ENCODE measurements at regions of chr3 and their contacts with region 1.

Region 1: DNA sequence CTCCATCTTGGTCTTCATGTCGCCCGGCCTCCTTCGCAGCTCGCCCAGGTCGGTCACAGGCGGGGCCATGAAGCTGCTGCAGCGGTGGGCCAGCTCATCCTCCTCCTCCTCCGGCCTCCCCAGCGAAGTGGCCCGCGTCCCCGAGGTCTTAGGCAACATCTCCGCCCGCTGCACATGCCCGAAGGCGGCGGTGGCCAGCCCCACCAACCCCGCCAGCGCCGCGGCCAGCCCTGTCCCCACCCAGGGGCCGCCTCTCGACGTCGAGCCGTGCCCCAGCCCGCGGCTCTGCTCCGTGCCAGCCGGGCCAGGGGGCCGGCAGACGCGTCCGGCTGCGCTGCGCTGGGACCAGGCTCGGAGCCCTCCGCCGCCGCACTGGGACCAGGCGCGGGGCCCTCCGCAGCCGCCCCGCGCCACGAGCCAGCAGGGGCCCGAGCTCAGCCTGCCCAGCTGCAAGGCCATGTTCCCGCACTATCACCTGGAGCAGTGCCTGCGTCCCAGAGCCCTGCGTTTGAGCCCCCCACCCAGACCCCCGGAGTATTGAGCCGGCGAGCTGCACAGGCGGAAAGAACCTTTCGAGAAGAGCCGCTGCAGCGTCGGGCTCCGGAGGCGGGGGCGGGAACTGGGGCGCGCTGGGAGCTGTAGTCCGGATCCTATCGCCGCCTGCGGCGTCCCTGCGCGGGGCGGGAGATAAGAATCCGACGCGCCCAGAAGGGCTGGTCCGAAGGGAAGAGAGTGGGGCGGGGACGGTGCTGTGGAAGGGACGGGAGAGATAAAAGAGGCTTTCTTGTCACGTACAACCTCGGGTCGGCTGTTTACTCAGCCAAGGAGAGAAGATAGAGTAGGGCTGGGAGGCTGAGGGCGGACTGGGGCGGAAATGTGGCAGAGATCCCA is at the start of gene CPOX:
- DNase-seq: peak; percentile 95
- ATAC-seq: peak; percentile 99
- H3K4me3 Mint-ChIP-seq: peak within 1 kb of the TSS; percentile 88
- H3K27ac Mint-ChIP-seq: peak within 1 kb of the TSS; percentile 90
- H3K4me1 Mint-ChIP-seq: peaks cover 51% of the 10 kb centered on the region
- H3K27me3 Mint-ChIP-seq: no peaks in the 10 kb centered on the region
- total RNA-seq, gene CPOX: 40.3 to 41.9 TPM

Region 2: DNA sequence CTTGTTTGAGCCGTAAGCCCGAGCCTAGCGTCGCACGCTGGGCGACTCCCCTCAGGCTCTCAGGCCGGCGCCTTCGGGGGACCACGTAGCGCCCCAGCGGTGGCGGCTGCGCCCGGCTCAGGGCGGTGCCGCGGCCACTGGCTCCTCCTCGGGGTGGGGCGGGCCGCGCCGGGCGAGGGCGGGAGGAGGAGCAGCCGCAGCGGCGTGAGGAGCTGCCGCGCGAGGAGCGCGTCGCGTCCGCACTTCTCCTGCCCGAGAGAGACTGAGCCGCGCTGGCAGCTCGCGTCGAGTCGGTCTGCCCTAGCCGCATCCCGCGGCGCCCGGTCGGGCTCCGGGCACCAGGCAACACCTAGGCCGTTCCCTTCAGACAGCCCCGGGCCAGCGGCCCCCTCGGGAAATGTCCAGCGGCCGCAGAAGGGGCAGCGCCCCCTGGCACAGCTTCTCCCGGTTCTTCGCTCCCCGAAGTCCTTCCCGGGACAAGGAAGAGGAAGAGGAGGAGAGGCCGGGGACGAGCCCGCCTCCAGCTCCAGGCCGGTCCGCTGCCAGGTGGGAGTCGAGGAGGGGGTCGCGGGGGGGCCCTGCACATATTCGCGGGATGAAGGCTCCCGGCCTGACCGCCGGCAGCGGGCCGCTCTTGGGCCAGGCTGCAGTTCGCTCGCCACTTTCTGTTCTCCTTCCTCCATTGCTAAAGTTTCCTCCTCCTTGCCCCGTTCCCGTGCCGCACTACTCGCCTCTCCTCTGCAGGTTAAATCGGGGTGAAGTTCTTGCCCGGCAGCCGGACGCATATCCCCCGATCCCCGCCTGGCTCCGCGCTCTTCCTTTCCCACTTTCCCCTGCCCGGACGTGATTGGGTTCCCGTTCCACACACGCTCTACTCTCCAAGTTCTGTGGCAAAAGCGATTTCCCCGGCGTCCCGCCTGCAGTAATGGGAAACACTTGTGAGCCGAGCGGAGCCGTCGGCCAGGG is 771.2 kb before region 1 on chr3 and contains the start of gene CRYBG3:
- CTCF ChIA-PET with region 1: no interaction called
- POLR2A ChIA-PET with region 1: no interaction called
- intact Hi-C with region 1: loop called in 1 of 2 experiments (anchors 10 kb)
- DNase-seq: peak; percentile 90
- ATAC-seq: peak; percentile 99
- H3K4me3 Mint-ChIP-seq: peak within 1 kb of the TSS; percentile 82
- H3K27ac Mint-ChIP-seq: peak within 1 kb of the TSS; percentile 66
- H3K4me1 Mint-ChIP-seq: peaks cover 18% of the 10 kb centered on the region
- H3K27me3 Mint-ChIP-seq: peaks cover 26% of the 10 kb centered on the region
- total RNA-seq, gene CRYBG3: 4.2 to 4.9 TPM

Region 3: DNA sequence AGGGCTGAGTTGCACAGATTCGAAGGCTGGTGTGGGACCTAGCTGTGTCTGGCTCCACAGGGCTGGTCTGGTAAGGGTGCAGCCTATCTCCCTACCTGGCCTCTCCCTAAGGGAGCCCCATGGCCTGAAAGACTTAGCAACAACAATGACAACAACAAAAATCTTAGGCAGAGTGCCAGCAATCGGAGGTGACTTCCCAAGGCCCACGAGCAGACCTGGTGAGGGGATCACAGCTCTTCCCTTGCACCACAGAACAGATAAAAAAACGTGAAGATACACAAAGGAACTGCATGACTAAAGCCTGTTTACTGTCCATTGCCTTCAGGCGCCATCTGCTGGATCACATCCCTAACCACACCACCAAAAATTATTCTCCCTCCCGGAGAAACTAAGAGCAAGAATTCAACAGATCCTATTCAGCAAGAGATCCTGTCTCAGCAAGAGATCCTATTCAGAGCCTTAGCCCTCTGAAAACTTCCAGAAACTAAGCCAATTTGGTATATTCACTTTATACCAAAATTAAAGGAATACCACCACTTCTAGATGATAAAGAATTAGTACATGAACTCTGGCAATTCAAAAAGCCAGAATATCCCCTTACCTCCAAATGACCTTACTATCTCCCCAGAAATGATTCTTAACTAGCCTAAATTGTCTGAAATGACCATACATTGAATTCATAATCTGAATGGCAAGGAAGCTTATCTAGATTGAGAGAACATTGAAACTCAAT is 263.7 kb before region 1 on chr3:
- CTCF ChIA-PET with region 1: no interaction called
- POLR2A ChIA-PET with region 1: no interaction called
- intact Hi-C with region 1: loop called (anchors 5 kb)
- DNase-seq: peak; percentile 60
- ATAC-seq: peak; percentile 67
- H3K4me3 Mint-ChIP-seq: no peak overlapping the region
- H3K27ac Mint-ChIP-seq: no peak overlapping the region
- H3K4me1 Mint-ChIP-seq: no peaks in the 10 kb centered on the region
- H3K27me3 Mint-ChIP-seq: peaks cover 19% of the 10 kb centered on the region

Region 4: DNA sequence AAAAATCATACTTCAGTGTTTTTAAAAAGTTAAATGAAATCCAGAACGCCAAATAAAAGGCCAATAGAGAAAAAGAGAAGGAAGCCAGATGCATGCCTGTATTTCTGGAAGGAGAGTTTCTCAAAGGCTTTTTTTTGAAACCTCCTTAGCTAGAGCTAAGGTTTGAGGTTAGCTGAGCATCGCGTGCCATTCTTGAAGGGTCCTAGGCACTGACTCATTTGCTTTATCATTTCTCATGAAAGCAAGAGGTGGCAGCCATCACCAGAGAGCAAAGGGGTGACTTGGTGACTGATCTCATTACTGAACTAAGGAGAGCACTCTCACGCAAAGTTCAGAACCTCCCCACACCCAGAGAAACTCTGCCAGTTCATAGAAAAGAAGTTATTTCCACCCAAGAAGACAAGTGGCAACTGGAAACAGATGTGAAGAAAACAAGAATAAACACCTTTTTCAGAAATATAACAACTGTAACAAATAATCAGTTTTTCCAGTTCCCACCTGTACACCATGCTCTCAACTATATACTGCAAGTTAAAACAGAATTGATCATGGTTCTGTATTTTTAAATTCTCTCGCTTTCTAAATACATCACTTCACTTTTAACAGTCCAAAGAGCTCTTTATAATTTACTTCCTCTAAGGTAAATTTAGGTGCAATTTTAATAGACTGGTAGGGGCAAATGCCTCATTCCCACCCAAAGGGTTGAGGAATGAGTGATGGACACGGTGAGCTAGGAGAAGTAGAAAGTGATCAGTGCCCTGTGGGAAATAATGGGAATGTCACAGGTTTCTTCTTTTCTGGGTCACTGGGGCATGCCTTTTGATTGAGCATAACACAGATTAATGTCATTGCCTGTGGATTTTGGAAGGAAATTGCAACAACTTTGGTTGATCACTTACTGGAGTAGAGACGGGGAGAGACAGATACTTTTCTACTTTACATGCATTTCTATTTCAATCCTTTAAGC is 36.8 kb before region 1 on chr3:
- CTCF ChIA-PET with region 1: interaction called, 4 read pairs
- POLR2A ChIA-PET with region 1: interaction called, 11 read pairs
- intact Hi-C with region 1: loop called (anchors 1 to 2 kb)
- DNase-seq: peak; percentile 86
- ATAC-seq: peak; percentile 78
- H3K4me3 Mint-ChIP-seq: peak overlapping the region; percentile 67
- H3K27ac Mint-ChIP-seq: peak overlapping the region; percentile 94
- H3K4me1 Mint-ChIP-seq: peaks cover 83% of the 10 kb centered on the region
- H3K27me3 Mint-ChIP-seq: no peaks in the 10 kb centered on the region

Region 5: GRCh38 chr3:98657457-98657856 is 64.2 kb after region 1 on chr3:
- CTCF ChIA-PET with region 1: interaction called, 12 read pairs
- POLR2A ChIA-PET with region 1: no interaction called
- intact Hi-C with region 1: no loop called
- DNase-seq: peak; percentile 79
- ATAC-seq: peak; percentile 88
- H3K4me3 Mint-ChIP-seq: no peak overlapping the region
- H3K27ac Mint-ChIP-seq: no peak overlapping the region
- H3K4me1 Mint-ChIP-seq: peaks cover 3% of the 10 kb centered on the region
- H3K27me3 Mint-ChIP-seq: peaks cover 16% of the 10 kb centered on the region

Region 6: DNA sequence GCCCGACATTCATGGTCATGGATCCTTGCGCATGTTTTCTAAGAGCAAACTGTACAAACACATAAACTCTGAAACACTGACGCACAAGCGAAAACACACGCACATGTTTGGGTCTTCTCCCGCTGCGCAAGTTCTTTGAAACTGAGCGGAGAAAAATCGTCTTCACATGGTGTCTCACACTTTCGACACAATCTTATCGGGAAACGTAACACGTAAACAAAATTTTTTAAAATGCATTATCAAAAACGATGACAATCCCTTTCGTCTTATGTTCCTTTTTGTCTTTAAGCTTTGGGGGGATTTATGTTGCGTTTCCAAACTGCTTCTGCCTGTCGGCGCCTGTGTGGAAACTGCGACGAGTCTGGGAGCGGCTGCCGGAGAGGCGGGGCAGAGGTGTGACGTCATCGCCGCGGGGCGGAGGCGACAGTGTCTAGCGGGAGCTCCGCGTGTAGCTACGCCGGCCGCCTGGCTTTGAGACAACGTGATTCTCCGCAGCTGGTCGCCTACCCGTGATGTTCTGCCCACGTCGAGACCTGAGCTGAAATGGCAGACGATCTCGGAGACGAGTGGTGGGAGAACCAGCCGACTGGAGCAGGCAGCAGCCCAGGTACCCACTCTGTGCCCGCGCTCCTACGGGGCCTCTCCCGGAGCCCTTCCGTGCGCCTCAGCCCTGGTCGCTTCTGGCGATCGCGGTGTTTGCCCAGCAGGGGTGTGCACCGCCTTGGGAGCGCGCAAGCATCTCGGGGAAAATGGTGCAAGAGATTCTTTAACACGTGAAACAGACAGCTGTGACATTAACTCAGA is 1224.3 kb after region 1 on chr3 and contains the start of gene CMSS1:
- CTCF ChIA-PET with region 1: no interaction called
- POLR2A ChIA-PET with region 1: no interaction called
- intact Hi-C with region 1: loop called in 1 of 2 experiments (anchors 10 kb)
- DNase-seq: peak; percentile 98
- ATAC-seq: peak; percentile 92
- H3K4me3 Mint-ChIP-seq: peak within 1 kb of the TSS; percentile 85
- H3K27ac Mint-ChIP-seq: peak within 1 kb of the TSS; percentile 97
- H3K4me1 Mint-ChIP-seq: peaks cover 42% of the 10 kb centered on the region
- H3K27me3 Mint-ChIP-seq: no peaks in the 10 kb centered on the region
- total RNA-seq, gene CMSS1: 94.0 to 96.3 TPM